B cell (primary cell): ENCODE measurements at regions of chr3 and their contacts with region 1.

Region 1: DNA sequence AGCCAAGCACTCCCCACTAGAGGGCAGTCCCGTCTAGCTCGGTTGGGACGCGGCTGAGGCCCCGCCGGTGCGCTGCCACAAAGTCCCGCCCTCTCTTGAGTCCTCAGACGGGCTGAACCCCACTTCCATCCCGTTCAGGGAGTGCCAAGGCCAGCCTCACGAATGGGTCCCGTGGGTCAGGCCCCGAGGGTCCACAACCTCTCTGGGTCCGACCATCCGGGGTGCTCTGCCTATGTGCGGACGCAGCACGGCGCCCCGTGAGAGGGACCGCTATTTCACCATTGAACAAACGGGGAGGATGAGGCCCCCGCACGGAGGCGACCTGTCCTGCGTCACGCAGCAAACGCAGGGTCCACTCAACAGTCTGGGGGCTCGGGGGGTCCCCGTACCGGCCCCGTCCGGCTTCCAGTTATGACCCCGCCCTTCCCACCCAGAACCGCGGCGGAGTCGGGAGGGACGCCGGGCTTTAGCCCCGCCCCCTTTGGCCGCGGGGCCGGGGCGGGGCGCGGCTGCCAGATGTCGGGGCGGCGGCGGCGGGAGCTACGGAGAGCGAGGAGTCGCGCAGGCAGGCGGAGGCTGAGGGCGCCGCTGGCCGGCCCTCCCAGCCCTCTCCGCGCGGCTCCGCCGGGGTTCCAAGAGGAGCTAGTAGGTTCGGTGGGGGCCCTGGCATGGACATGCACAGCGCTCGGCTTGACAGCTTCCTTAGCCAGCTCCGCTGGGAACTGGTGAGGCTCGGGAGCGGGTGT is at the start of gene INKA1:
- DNase-seq: peak; percentile 94
- ATAC-seq: peak; percentile 63
- H3K4me3 ChIP-seq: peak within 1 kb of the TSS; percentile 73 to 99 (median 95)
- H3K4me3 Mint-ChIP-seq: peak within 1 kb of the TSS; percentile 86
- H3K27ac ChIP-seq: peak within 1 kb of the TSS; percentile 91 to 97
- H3K27ac Mint-ChIP-seq: peak within 1 kb of the TSS; percentile 98
- H3K4me1 ChIP-seq: peaks cover 42 to 47% of the 10 kb centered on the region in 2 donors
- H3K4me1 Mint-ChIP-seq: peaks cover 52% of the 10 kb centered on the region
- H3K27me3 ChIP-seq: peaks cover 0 to 3% (median 0%) of the 10 kb centered on the region in 4 experiments
- H3K27me3 Mint-ChIP-seq: peaks cover 5% of the 10 kb centered on the region
- CTCF ChIP-seq: peak; percentile 84
- total RNA-seq, gene INKA1: 25.8 and 28.2 TPM in 2 replicates

Region 2: DNA sequence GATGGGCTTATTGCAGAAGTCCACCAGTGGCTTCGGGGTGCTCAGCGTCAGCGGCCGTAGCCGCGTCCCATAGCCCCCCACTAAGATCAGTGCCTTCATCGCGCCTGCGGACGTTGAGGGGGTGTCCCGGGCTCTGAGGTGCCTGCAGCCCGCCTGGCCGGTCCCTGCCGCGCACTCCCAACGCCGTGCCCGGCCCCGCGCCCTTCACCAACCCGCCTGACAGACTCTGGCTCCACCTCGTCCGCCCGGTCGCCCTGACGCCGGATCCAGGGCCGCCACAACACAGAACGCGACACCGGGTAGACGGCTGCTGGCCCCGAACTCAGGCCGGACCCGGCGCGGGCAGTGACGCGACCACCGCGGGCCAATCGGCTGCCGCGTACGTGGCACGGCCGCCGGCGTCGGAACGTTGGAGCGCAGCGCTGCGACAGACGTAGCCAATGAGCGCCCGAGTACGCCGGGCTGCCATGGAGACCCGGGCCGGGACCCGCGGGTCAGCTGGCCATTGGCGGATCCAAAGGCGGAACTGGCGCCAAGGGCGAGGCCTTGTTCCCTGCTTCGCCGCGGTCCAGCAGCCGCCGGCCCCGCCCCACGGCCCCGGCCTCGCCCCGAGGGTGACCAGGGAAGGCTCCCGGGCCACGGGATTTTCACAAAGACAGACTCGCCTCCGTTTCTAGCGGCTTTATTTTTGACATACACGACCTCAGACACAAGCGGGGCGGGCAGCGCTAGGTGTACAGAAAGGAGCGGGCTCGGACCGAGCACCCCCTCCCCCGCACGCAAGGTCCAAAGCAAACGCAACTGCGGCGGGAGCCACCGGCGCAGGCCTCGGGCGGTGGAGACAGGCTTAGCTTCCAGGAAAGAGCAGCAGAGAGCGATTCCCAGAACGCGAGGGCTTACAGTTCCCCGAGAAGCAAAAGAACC is 79.0 kb before region 1 on chr3 and contains the start of gene GMPPB:
- CTCF ChIA-PET with region 1: interaction called, 5 read pairs
- POLR2A ChIA-PET with region 1: interaction called, 9 read pairs
- intact Hi-C with region 1: loop called (anchors 1 kb)
- DNase-seq: peak; percentile 97
- ATAC-seq: peak; percentile 78
- H3K4me3 ChIP-seq: peak within 1 kb of the TSS; percentile 63 to 99 (median 92)
- H3K4me3 Mint-ChIP-seq: peak within 1 kb of the TSS; percentile 96
- H3K27ac ChIP-seq: peak within 1 kb of the TSS; percentile 100
- H3K27ac Mint-ChIP-seq: peak within 1 kb of the TSS; percentile 97
- H3K4me1 ChIP-seq: peaks cover 27 to 59% of the 10 kb centered on the region in 2 donors
- H3K4me1 Mint-ChIP-seq: peaks cover 59% of the 10 kb centered on the region
- H3K27me3 ChIP-seq: no peaks in the 10 kb centered on the region
- H3K27me3 Mint-ChIP-seq: no peaks in the 10 kb centered on the region
- CTCF ChIP-seq: no peak
- total RNA-seq, gene GMPPB: 30.0 and 31.4 TPM in 2 replicates

Region 3: GRCh38 chr3:49813497-49814174 is 10.7 kb after region 1 on chr3 and contains the start of gene UBA7:
- CTCF ChIA-PET with region 1: interaction called, 121 read pairs
- POLR2A ChIA-PET with region 1: interaction called, 24 read pairs
- intact Hi-C with region 1: loop called (anchors 1 kb)
- DNase-seq: peak; percentile 70
- ATAC-seq: peak; percentile 95
- H3K4me3 ChIP-seq: peak within 1 kb of the TSS; percentile 48 to 93 (median 78)
- H3K4me3 Mint-ChIP-seq: peak within 1 kb of the TSS; percentile 99
- H3K27ac ChIP-seq: peak within 1 kb of the TSS; percentile 68 to 92
- H3K27ac Mint-ChIP-seq: peak within 1 kb of the TSS; percentile 99
- H3K4me1 ChIP-seq: peaks cover 26 to 47% of the 10 kb centered on the region in 2 donors
- H3K4me1 Mint-ChIP-seq: peaks cover 52% of the 10 kb centered on the region
- H3K27me3 ChIP-seq: no peaks in the 10 kb centered on the region
- H3K27me3 Mint-ChIP-seq: no peaks in the 10 kb centered on the region
- CTCF ChIP-seq: no peak
- total RNA-seq, gene UBA7: 418 and 436 TPM in 2 replicates

Region 4: GRCh38 chr3:49906004-49906743 is 103.3 kb after region 1 on chr3:
- CTCF ChIA-PET with region 1: interaction called, 19 read pairs
- POLR2A ChIA-PET with region 1: interaction called, 8 read pairs
- intact Hi-C with region 1: loop called (anchors 1 kb)
- DNase-seq: peak; percentile 66
- ATAC-seq: peak; percentile 37
- H3K4me3 ChIP-seq: peak overlapping the region in 3 of 5 experiments; percentile 5 to 39 (median 6)
- H3K4me3 Mint-ChIP-seq: peak overlapping the region; percentile 74
- H3K27ac ChIP-seq: peak overlapping the region in 1 of 2 donors; percentile 30
- H3K27ac Mint-ChIP-seq: peak overlapping the region; percentile 83
- H3K4me1 ChIP-seq: peaks cover 14 to 36% of the 10 kb centered on the region in 2 donors
- H3K4me1 Mint-ChIP-seq: peaks cover 26% of the 10 kb centered on the region
- H3K27me3 ChIP-seq: no peaks in the 10 kb centered on the region
- H3K27me3 Mint-ChIP-seq: no peaks in the 10 kb centered on the region
- CTCF ChIP-seq: peak; percentile 62

Region 5: GRCh38 chr3:49972656-49973055 is 169.8 kb after region 1 on chr3:
- CTCF ChIA-PET with region 1: no interaction called
- POLR2A ChIA-PET with region 1: interaction called, 11 read pairs
- intact Hi-C with region 1: no loop called
- DNase-seq: no peak
- ATAC-seq: no peak
- H3K4me3 ChIP-seq: no peak overlapping the region
- H3K4me3 Mint-ChIP-seq: no peak overlapping the region
- H3K27ac ChIP-seq: no peak overlapping the region
- H3K27ac Mint-ChIP-seq: no peak overlapping the region
- H3K4me1 ChIP-seq: no peaks in the 10 kb centered on the region
- H3K4me1 Mint-ChIP-seq: peaks cover 6% of the 10 kb centered on the region
- H3K27me3 ChIP-seq: no peaks in the 10 kb centered on the region
- H3K27me3 Mint-ChIP-seq: no peaks in the 10 kb centered on the region
- CTCF ChIP-seq: no peak